Endothelial cell of umbilical vein (primary cell): ENCODE measurements at regions of chr10 and their contacts with region 1.

Region 1: DNA sequence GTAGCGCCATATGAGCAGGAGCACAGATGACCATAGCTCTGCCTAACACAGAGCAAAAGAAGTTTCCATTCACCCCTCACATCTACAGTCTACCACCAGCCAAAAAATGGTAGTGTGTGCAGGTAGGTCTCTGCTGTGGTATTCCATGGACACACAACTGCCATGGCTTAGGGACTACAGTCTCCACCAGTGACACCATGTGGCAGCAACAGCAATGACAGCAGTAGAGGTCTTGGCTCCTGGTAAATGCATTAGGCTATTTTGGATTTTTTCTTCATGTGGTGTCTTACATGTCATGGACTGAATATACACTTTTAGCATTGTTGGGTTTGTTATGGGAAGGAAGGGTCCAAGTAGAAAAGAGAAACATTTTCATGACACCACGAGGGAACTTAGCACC is 70.1 kb upstream of the CABCOCO1 start:
- DNase-seq: peak; percentile 7
- H3K4me3 ChIP-seq: no peak overlapping the region
- H3K27ac ChIP-seq: no peak overlapping the region
- H3K4me1 ChIP-seq: peaks cover 17% of the 10 kb centered on the region
- H3K27me3 ChIP-seq: no peaks in the 10 kb centered on the region
- CTCF ChIP-seq: peak; percentile 23 to 40
- POLR2A ChIP-seq: no peak

Region 2: DNA sequence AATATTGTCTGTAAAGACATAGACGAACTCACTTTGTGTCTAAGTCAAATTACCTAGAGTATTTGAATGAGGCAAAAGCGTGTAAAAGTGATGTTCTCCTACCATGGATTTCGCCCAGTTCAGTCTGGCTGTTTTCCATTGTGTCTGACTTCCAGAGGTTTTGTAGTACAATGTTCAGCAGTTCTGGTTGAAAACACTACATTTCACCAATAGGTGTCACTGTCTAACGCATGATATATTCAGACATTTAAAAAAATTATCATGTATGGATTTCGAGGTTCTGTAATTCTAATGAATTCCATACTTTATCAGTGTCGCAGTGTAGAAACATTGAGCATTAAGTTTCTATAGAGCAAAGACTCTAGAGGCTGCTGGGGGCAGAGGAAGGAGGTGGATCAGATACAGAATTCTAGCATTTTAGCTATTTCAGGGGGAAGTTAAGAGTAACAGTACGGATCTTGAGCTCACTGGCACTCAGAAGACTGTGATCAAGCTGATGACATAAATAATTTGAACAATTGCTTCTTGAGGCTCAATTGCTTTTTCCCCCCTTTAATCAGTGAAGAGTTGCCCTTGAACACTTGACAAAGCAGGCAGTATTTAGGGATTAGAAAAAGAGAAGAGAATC is 451.7 kb before region 1 on chr10:
- CTCF ChIA-PET with region 1: no interaction called
- POLR2A ChIA-PET with region 1: no interaction called
- dilution Hi-C with region 1: no loop called
- intact Hi-C with region 1: loop called (anchors 1 kb)
- DNase-seq: peak; percentile 88
- H3K4me3 ChIP-seq: no peak overlapping the region
- H3K27ac ChIP-seq: peak overlapping the region; percentile 12
- H3K4me1 ChIP-seq: peaks cover 21% of the 10 kb centered on the region
- H3K27me3 ChIP-seq: no peaks in the 10 kb centered on the region
- CTCF ChIP-seq: peak; percentile 51 to 55
- POLR2A ChIP-seq: no peak

Region 3: DNA sequence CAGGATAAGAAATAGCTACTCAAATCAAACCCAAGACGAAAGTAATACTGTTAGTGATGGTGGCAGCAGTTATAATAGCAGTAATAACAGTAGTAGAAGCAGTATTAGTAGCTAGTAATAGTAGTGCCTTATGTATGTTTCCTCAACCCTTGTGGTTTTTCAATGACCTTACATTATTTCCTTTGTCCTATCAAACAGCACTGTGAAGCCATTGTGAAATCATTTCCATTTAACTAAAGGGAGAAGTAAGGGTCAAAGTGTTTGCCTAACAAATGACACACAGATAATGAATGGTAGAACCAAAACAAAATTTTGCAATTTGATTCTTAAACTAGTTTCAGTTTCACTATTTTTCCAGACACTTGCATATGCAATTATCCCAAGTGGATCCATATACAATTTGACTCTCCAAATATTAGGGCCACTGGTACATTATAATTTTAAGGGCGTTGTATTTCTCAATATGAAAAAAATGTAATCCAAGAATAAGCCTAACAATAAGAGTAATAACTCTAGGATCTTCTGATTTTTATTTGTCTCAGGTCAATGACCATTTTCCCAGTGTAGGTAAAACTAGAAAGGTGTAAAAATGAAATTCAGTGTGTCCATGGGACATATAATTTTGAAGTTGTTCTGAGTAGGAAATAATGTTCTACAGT is 105.7 kb before region 1 on chr10:
- CTCF ChIA-PET with region 1: no interaction called
- POLR2A ChIA-PET with region 1: no interaction called
- dilution Hi-C with region 1: no loop called
- intact Hi-C with region 1: loop called (anchors 5 kb)
- DNase-seq: peak; percentile 17
- H3K4me3 ChIP-seq: no peak overlapping the region
- H3K27ac ChIP-seq: no peak overlapping the region
- H3K4me1 ChIP-seq: peaks cover 9% of the 10 kb centered on the region
- H3K27me3 ChIP-seq: no peaks in the 10 kb centered on the region
- CTCF ChIP-seq: no peak
- POLR2A ChIP-seq: no peak

Region 4: DNA sequence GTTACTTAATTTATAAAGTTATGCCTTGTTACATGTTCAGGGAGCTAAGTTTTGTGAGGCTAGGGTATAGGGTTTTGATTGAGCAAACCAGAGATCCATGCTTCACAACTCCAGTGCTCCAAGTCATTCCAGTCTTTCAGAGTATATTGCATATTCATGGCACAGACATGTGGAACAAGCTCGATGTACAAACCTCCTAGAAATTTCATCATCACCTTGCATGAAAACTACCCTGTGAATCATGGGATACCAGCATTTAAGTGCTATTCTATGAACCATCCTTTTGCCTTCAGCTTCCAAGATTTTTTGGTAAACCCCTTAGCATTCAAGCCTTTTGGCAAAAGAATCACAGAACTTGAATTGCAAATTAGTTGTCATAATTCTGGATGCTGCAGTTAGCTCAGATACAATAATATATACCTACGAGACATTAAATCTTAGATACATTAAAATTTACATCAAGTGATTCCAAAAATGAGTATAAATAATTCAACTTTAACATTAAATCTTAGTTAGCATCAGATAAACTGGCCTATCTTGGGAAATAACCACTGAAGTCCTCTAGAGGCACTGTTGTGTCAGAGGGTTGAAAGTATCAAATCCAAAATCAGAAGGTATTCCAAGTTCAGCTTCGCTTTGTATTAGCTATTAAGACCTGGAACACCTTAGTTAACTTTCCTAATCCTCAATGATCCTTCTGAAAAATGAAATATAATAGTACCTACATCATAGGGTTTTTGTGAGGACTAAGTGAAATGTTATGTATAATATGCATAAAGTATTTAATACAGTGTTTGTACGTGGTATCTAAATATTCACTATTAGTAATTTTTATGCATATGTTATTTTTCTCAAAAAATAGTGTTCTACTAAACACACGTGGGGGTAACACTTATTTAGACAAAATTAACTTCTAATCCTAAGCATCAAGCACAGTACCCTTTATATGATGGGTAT is 14.6 kb after region 1 on chr10:
- CTCF ChIA-PET with region 1: interaction called, 10 read pairs
- POLR2A ChIA-PET with region 1: no interaction called
- dilution Hi-C with region 1: no loop called
- intact Hi-C with region 1: no loop called
- DNase-seq: peak; percentile 19
- H3K4me3 ChIP-seq: no peak overlapping the region
- H3K27ac ChIP-seq: no peak overlapping the region
- H3K4me1 ChIP-seq: peaks cover 2% of the 10 kb centered on the region
- H3K27me3 ChIP-seq: no peaks in the 10 kb centered on the region
- CTCF ChIP-seq: peak; percentile 25 to 32
- POLR2A ChIP-seq: no peak

Region 5: GRCh38 chr10:61621605-61622060 is 29.1 kb after region 1 on chr10:
- CTCF ChIA-PET with region 1: interaction called, 3 read pairs
- POLR2A ChIA-PET with region 1: no interaction called
- dilution Hi-C with region 1: no loop called
- intact Hi-C with region 1: loop called (anchors 1 kb)
- DNase-seq: peak; percentile 78
- H3K4me3 ChIP-seq: peak overlapping the region in 2 of 3 experiments; percentile 7 to 47
- H3K27ac ChIP-seq: peak overlapping the region; percentile 48
- H3K4me1 ChIP-seq: peaks cover 27% of the 10 kb centered on the region
- H3K27me3 ChIP-seq: no peaks in the 10 kb centered on the region
- CTCF ChIP-seq: no peak
- POLR2A ChIP-seq: no peak

Region 6: GRCh38 chr10:61744469-61744868 is 151.9 kb after region 1 on chr10:
- CTCF ChIA-PET with region 1: no interaction called
- POLR2A ChIA-PET with region 1: no interaction called
- dilution Hi-C with region 1: no loop called
- intact Hi-C with region 1: no loop called
- DNase-seq: no peak
- H3K4me3 ChIP-seq: no peak overlapping the region
- H3K27ac ChIP-seq: no peak overlapping the region
- H3K4me1 ChIP-seq: no peaks in the 10 kb centered on the region
- H3K27me3 ChIP-seq: no peaks in the 10 kb centered on the region
- CTCF ChIP-seq: no peak
- POLR2A ChIP-seq: no peak